ENCODE measurements at regions of chr4 and their contacts with region 1.

Region 1: DNA sequence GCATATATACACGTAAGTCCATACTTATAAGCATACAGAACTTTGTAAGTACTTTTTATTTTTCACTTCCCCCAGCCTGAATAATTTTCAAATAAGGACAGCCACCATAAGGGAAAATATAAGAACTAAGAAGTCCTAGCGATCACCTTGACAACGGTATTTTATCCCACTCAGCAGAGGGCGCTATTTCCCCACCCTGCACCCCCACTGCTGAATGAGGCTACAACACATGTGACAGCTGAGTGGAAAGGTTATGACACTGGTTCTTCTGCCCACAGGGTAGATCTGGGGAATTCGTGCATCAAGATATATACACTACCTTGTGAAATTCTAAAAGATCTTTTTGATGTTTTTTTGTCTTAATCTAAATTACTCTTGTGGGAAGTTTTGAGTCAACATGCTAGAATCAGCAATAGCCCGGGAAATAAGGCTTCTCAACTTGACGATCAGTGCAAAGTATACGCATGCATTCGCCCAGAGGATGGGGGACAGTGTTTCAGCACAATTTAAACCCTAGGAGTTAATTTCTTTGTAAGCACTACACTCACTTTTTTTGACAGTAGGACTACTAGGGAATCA is 151.5 kb downstream of the CORIN start:
- DNase-seq: peak in 1 of 2 donors; percentile 16
- ATAC-seq: no peak
- H3K4me3 ChIP-seq: no peak overlapping the region
- H3K27ac ChIP-seq: no peak overlapping the region
- H3K4me1 ChIP-seq: no peaks in the 10 kb centered on the region
- H3K27me3 ChIP-seq: no peaks in the 10 kb centered on the region
- CTCF ChIP-seq: peak in 3 of 5 experiments; percentile 11 to 57 (median 43)
- POLR2A ChIP-seq: no peak

Region 2: GRCh38 chr4:47551682-47552081 is 134.7 kb before region 1 on chr4:
- in situ Hi-C with region 1: no loop called
- intact Hi-C with region 1: no loop called
- DNase-seq: no peak
- ATAC-seq: no peak
- H3K4me3 ChIP-seq: no peak overlapping the region
- H3K27ac ChIP-seq: no peak overlapping the region
- H3K4me1 ChIP-seq: no peaks in the 10 kb centered on the region
- H3K27me3 ChIP-seq: no peaks in the 10 kb centered on the region
- CTCF ChIP-seq: no peak
- POLR2A ChIP-seq: no peak

Region 3: DNA sequence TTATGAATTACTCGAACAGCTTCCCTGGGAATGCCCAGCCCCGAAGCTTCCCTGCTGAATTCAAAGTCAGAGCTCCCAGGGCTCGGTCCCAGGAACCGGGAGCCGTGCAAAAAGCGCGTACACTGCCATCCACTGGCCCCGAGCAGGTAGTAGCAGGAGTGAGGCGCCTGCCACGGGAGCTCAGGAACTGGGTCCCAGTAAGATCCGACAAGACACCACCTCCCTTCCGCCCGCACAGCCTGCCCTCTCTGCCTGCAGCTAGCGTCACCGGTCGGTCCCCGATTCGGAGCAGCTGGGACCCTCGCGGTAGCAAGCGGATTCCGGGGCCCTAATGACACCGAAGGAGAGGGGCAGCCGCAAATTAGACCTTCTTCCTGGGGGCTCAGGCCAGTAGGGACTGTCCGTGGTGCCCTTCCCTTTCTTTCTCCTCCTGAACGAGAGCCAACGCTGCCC is 150.3 kb after region 1 on chr4:
- in situ Hi-C with region 1: loop called in 1 of 4 experiments (anchors 25 kb)
- intact Hi-C with region 1: loop called (anchors 1 kb)
- DNase-seq: peak; percentile 20 to 42
- ATAC-seq: peak; percentile 76 to 77
- H3K4me3 ChIP-seq: peak overlapping the region; percentile 26 to 53 (median 50)
- H3K27ac ChIP-seq: no peak overlapping the region
- H3K4me1 ChIP-seq: peaks cover 18 to 21% of the 10 kb centered on the region in 2 donors
- H3K27me3 ChIP-seq: peaks cover 7 to 19% (median 14%) of the 10 kb centered on the region in 3 donors
- CTCF ChIP-seq: peak; percentile 27 to 70 (median 54)
- POLR2A ChIP-seq: no peak

Region 4: DNA sequence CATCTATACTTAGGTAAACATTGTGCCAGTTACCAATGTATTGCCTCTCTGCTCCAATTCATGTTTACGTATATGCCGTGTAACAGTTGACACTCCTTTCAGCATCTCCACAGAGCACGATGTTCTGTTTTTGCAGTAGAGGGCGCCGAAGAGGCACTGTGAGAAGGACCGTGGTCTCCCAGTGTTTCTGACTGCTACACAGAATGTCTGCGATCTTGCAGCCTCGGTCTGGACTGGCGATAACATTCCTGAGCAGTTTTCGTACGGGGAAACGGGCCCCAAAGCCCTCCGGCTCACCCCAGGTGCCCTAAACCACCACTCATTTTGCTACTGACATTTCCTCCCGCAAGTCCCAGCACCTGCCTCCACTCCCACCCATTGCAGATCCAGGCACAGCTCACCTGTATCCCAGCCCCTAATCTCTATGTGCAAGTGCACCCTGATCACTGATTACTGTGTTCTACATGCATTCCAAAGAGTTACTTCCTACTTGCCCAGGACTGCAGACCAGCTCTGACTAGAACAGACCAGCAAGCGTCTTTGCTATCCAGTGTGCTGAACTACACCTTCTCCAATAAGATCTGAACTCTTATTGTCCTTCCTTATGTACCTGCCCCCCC is 240.4 kb after region 1 on chr4:
- in situ Hi-C with region 1: loop called (anchors 10 to 25 kb)
- intact Hi-C with region 1: no loop called
- DNase-seq: no peak
- ATAC-seq: peak in 1 of 2 donors; percentile 72
- H3K4me3 ChIP-seq: peak overlapping the region in 1 of 4 donors; percentile 39
- H3K27ac ChIP-seq: no peak overlapping the region
- H3K4me1 ChIP-seq: no peaks in the 10 kb centered on the region
- H3K27me3 ChIP-seq: no peaks in the 10 kb centered on the region
- CTCF ChIP-seq: peak in 3 of 5 experiments; percentile 21 to 59 (median 42)
- POLR2A ChIP-seq: no peak

Region 5: DNA sequence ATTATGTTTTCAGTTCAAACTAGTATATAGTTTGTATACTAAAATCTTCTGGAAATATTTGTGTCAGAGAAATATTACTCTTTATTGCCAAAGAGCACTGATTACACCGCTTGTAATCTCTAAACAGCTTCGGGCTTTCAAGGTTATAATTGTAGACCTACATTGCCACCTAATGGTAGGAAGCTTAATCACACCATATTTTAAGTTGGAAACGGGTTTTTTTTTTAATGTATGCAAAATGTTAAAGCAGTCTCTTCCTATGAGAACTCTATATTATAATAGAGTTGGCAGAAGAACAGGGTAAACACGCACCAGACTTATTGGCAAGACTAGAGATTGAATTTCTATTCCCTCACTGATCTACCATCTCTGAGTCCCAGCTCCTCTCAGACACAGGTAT is 247.5 kb after region 1 on chr4:
- in situ Hi-C with region 1: loop called (anchors 10 to 25 kb)
- intact Hi-C with region 1: no loop called
- DNase-seq: no peak
- ATAC-seq: no peak
- H3K4me3 ChIP-seq: no peak overlapping the region
- H3K27ac ChIP-seq: no peak overlapping the region
- H3K4me1 ChIP-seq: no peaks in the 10 kb centered on the region
- H3K27me3 ChIP-seq: no peaks in the 10 kb centered on the region
- CTCF ChIP-seq: peak in 4 of 5 experiments; percentile 26 to 60 (median 34)
- POLR2A ChIP-seq: no peak

Measured in gastrocnemius medialis (tissue), 4 donors.